ENCODE measurements at regions of chr1 and their contacts with region 1.

Region 1: GRCh38 chr1:94329986-94330385 is 88.2 kb upstream of the ABCD3 start:
- DNase-seq: no peak
- ATAC-seq: peak; percentile 21
- H3K4me3 ChIP-seq: peak overlapping the region in 1 of 2 experiments; percentile 5; a peak in 1 of 4 replicates
- H3K27ac ChIP-seq: peak overlapping the region; percentile 90
- H3K4me1 ChIP-seq: peaks cover 65 to 89% of the 10 kb centered on the region in 2 experiments
- H3K27me3 ChIP-seq: no peaks in the 10 kb centered on the region
- CTCF ChIP-seq: peak; percentile 58 to 87 (median 63)
- POLR2A ChIP-seq: no peak
- RAD21 ChIP-seq: peak; percentile 97

Region 2: DNA sequence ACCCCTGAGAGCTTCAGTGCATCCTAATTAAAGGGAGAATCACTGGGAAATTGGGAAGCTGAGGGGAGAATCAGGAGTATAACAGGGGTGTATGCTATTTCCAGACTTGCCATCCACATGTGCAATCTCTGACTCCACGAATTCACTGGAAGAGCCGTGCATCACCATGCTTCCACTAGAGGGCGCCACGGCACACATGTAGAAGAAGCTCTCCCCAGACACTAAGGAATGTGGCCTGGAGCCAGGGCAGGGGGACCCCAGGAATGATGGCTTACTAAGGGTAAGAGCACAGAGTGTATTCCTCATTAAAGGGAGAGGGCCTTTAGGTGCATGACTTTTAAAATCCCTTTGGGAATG is 290.5 kb before region 1 on chr1:
- CTCF ChIA-PET with region 1: interaction called, 338 read pairs
- POLR2A ChIA-PET with region 1: interaction called, 8 read pairs
- RAD21 ChIA-PET with region 1: interaction called, 21 to 22 read pairs
- intact Hi-C with region 1: no loop called
- DNase-seq: peak; percentile 56
- ATAC-seq: peak; percentile 89
- H3K4me3 ChIP-seq: no peak overlapping the region
- H3K27ac ChIP-seq: no peak overlapping the region
- H3K4me1 ChIP-seq: peaks cover 2 to 12% of the 10 kb centered on the region in 2 experiments; a peak in 3 of 4 replicates
- H3K27me3 ChIP-seq: no peaks in the 10 kb centered on the region
- CTCF ChIP-seq: peak; percentile 87 to 99 (median 97)
- POLR2A ChIP-seq: no peak
- RAD21 ChIP-seq: peak; percentile 82

Region 3: GRCh38 chr1:94061513-94062443 is 268.2 kb before region 1 on chr1:
- CTCF ChIA-PET with region 1: interaction called, 255 read pairs
- POLR2A ChIA-PET with region 1: interaction called, 38 read pairs
- RAD21 ChIA-PET with region 1: interaction called, 14 to 49 read pairs
- intact Hi-C with region 1: loop called (anchors 1 kb)
- DNase-seq: peak; percentile 67
- ATAC-seq: peak; percentile 94
- H3K4me3 ChIP-seq: no peak overlapping the region
- H3K27ac ChIP-seq: no peak overlapping the region
- H3K4me1 ChIP-seq: peaks cover 18 to 36% of the 10 kb centered on the region in 2 experiments
- H3K27me3 ChIP-seq: no peaks in the 10 kb centered on the region
- CTCF ChIP-seq: peak; percentile 90 to 96 (median 92)
- POLR2A ChIP-seq: no peak
- RAD21 ChIP-seq: peak; percentile 99

Region 4: DNA sequence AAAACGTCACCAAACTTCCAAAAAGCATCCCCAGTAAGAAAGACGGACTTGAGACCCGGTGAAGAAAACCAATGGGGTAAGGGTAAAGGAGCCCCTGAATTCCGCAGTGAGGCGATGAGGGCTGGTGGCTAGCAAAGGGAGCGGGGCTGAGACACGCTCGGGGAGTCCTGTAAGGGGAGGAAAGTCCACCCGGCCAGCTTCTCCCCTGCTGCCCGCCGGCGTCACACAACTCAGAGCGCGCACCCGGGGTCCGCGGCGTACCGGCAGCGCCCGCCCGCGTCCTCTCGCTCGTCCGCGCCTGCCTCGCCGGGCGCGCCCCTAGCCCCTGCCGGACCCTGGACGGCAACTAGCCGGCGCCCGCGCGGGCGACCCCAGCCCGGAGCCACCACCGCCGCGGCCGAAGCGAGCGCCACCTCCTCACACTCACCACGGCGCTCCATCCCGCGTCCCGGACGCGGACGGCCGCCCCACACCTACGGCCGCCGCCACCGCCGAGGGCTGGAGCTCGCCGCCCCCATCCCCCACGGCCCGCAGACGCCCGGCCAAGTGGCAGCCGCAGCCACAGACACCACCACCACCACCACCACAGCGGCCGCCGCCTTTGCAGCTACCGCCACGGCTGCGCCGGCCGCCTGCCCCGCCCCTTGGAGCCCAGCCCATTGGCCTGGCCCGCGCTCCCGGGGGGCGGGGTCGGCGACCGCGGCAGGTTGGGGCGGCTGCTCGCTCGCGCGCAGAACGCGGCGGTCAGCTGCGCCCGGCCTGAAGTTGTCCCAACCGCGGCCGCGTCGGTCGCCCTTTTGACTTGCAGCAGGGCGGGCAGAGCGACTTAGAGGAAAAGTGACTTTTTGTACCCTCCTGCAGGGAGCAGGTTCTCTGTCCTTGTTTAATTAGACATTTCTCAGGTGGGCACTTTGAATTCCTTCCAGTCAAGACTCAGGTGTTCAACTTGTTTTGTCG is 82.6 kb before region 1 on chr1:
- CTCF ChIA-PET with region 1: interaction called, 8 read pairs
- POLR2A ChIA-PET with region 1: interaction called, 19 read pairs
- RAD21 ChIA-PET with region 1: interaction called, 3 to 5 read pairs
- intact Hi-C with region 1: loop called (anchors 2 kb)
- DNase-seq: peak; percentile 67
- ATAC-seq: peak; percentile 81
- H3K4me3 ChIP-seq: peak overlapping the region; percentile 83
- H3K27ac ChIP-seq: peak overlapping the region; percentile 92
- H3K4me1 ChIP-seq: peaks cover 47 to 80% of the 10 kb centered on the region in 2 experiments
- H3K27me3 ChIP-seq: no peaks in the 10 kb centered on the region
- CTCF ChIP-seq: no peak
- POLR2A ChIP-seq: peak; percentile 80
- RAD21 ChIP-seq: peak; percentile 10; the same call in 1 of the 2 replicates

Region 5: DNA sequence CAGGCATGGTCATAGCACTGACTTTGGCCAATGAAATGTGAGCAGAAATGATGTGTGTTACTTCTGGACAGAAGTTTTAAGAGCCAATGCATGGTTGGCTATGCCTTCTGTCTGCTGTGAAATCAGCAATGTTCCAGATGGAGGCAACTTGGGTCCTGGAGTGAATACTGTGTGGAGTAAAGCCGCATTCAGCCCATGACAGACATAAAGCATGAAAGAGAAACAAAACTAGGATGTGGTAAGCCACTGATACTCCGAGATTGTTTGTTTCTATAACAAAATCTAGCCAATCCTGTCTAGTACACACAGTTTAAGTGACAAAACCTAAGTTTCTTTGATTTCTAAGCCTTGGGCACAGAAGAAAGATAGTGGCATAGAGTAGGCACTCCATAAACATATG is 45.5 kb before region 1 on chr1:
- CTCF ChIA-PET with region 1: no interaction called
- POLR2A ChIA-PET with region 1: interaction called, 11 read pairs
- RAD21 ChIA-PET with region 1: interaction called in 1 of 2 experiments, 3 read pairs
- intact Hi-C with region 1: no loop called
- DNase-seq: no peak
- ATAC-seq: no peak
- H3K4me3 ChIP-seq: no peak overlapping the region
- H3K27ac ChIP-seq: peak overlapping the region; percentile 69; the same call in 1 of the 2 replicates
- H3K4me1 ChIP-seq: peaks cover 58 to 78% of the 10 kb centered on the region in 2 experiments
- H3K27me3 ChIP-seq: no peaks in the 10 kb centered on the region
- CTCF ChIP-seq: no peak
- POLR2A ChIP-seq: no peak
- RAD21 ChIP-seq: no peak